CD4-positive, alpha-beta memory T cell (primary cell): ENCODE measurements at regions of chr6 and their contacts with region 1.

Region 1: DNA sequence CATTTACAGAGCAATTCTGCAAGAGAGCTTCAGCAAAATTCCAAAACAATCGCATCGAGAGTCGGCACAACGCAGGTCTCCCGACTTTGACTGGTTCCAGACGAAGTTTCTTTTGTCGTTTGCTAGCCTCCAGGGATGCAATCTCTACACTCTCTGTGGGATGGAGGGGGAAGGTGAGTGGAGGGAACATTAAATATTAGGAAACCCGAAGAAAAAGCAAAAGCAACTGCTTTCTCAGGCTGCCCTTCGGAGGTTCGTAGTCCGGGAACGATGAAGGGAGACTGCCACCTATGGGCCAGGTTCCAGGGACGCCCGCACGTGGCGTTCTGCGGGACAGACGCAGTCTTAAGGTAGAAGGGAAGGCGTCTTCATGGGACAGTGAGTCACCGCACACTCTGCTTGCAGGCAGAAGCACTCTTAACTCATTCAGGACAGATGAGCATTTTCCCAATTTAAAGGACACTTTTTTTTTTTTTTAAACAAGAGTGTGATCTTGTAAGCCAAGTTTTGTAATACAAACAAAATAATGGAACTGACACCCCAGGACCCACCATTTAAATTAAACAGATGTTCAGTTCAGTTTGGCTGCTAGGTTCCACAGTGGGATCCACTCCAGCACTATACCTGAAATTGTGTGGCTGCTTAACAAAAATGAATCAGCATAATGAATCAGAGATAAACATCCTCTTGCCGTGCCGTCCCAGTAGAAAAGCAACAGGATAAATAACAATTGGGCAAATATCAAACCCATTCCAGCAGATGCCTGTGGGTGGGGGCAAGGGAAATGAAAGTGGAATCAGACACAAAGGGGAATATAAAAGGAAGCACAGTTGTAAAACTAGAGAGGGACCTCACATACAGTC is 65.8 kb upstream of the ARMC2 start:
- DNase-seq: peak; percentile 69 to 74 (median 72)
- H3K4me3 ChIP-seq: peak overlapping the region in 1 of 2 donors; percentile 40
- H3K4me3 Mint-ChIP-seq: peak overlapping the region; percentile 78 to 93 (median 87)
- H3K27ac ChIP-seq: no peak overlapping the region
- H3K27ac Mint-ChIP-seq: peak overlapping the region in 5 of 7 donors; percentile 24 to 78 (median 47)
- H3K4me1 ChIP-seq: peaks cover 5% of the 10 kb centered on the region
- H3K4me1 Mint-ChIP-seq: peaks cover 4 to 11% (median 7%) of the 10 kb centered on the region in 4 donors
- H3K27me3 ChIP-seq: no peaks in the 10 kb centered on the region
- H3K27me3 Mint-ChIP-seq: no peaks in the 10 kb centered on the region

Region 2: GRCh38 chr6:108541838-108542759 is 240.3 kb before region 1 on chr6:
- CTCF ChIA-PET with region 1: interaction called, 68 read pairs
- POLR2A ChIA-PET with region 1: interaction called, 5 read pairs
- intact Hi-C with region 1: loop called (anchors 1 kb)
- DNase-seq: peak; percentile 71 to 74 (median 73)
- H3K4me3 ChIP-seq: no peak overlapping the region
- H3K4me3 Mint-ChIP-seq: peak overlapping the region in 4 of 8 donors; percentile 16 to 71 (median 56)
- H3K27ac ChIP-seq: no peak overlapping the region
- H3K27ac Mint-ChIP-seq: no peak overlapping the region
- H3K4me1 ChIP-seq: peaks cover 8% of the 10 kb centered on the region
- H3K4me1 Mint-ChIP-seq: peaks cover 6 to 17% (median 8%) of the 10 kb centered on the region in 4 donors
- H3K27me3 ChIP-seq: no peaks in the 10 kb centered on the region
- H3K27me3 Mint-ChIP-seq: peaks cover 4 to 6% of the 10 kb centered on the region in 2 donors

Region 3: DNA sequence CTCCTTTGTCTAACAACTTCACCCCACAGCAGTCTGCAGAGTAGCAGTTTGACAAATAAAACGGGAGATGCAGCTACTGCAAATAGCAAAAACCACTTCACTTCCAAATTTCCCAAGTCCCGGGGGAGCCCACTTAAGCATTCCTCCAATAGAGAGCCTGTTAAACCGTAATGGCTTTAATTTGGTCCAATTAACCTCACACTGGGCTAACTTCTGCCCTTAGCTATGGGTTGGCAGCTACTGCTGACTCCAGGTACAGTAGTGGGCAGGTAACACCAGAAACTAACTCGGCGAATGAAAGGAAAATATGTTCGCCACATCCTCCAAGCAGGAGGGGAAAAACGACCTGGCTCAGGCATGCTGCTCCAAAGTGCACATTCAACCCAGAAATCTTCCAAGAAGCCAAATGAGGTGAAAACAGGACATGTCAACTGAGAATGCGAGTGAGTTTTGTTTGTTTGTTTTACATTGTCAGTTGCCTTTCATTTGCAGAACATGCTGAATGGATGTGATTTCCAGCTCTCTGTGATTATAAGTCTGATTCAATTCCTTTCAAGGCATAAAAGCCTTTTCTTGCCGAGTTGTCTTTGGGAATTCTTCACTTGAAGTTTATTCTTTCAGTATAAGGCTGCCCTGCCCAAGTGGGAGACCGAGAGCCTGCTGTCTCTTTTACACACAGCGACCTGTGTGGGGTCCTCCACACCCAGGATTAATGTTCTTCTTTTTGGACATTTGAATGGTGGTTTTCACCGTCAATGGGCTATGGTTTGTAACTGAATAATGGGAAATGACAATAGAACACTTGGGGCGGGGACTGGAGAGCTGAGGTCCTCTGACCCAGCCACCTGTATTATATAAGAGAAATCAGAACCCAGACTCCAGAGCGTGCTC is 51.5 kb before region 1 on chr6:
- CTCF ChIA-PET with region 1: no interaction called
- POLR2A ChIA-PET with region 1: no interaction called
- intact Hi-C with region 1: no loop called
- DNase-seq: no peak
- H3K4me3 ChIP-seq: no peak overlapping the region
- H3K4me3 Mint-ChIP-seq: no peak overlapping the region
- H3K27ac ChIP-seq: no peak overlapping the region
- H3K27ac Mint-ChIP-seq: no peak overlapping the region
- H3K4me1 ChIP-seq: no peaks in the 10 kb centered on the region
- H3K4me1 Mint-ChIP-seq: no peaks in the 10 kb centered on the region
- H3K27me3 ChIP-seq: no peaks in the 10 kb centered on the region
- H3K27me3 Mint-ChIP-seq: peaks cover 0 to 1% of the 10 kb centered on the region in 2 donors